CD8-positive, alpha-beta T cell (primary cell): ENCODE measurements at regions of chr9 and their contacts with region 1.

Region 1: GRCh38 chr9:128771745-128772519 is at the start of gene ZER1:
- DNase-seq: peak; percentile 86 to 98 (median 95)
- ATAC-seq: peak; percentile 85
- H3K4me3 ChIP-seq: peak within 1 kb of the TSS; percentile 82 to 98
- H3K4me3 Mint-ChIP-seq: peak within 1 kb of the TSS; percentile 96
- H3K27ac ChIP-seq: peak within 1 kb of the TSS; percentile 80 to 98
- H3K27ac Mint-ChIP-seq: peak within 1 kb of the TSS; percentile 99
- H3K4me1 ChIP-seq: peaks cover 22% of the 10 kb centered on the region
- H3K4me1 Mint-ChIP-seq: peaks cover 33% of the 10 kb centered on the region
- H3K27me3 ChIP-seq: no peaks in the 10 kb centered on the region
- H3K27me3 Mint-ChIP-seq: no peaks in the 10 kb centered on the region
- CTCF ChIP-seq: no peak
- total RNA-seq, gene ZER1: 35.9 to 45.2 TPM

Region 2: GRCh38 chr9:128688512-128689292 is 83.2 kb before region 1 on chr9 and contains the start of gene SET:
- CTCF ChIA-PET with region 1: no interaction called
- POLR2A ChIA-PET with region 1: interaction called, 5 read pairs
- intact Hi-C with region 1: loop called (anchors 1 kb)
- DNase-seq: peak; percentile 81 to 97 (median 92)
- ATAC-seq: peak; percentile 78
- H3K4me3 ChIP-seq: peak within 1 kb of the TSS; percentile 68 to 90
- H3K4me3 Mint-ChIP-seq: peak within 1 kb of the TSS; percentile 90
- H3K27ac ChIP-seq: peak within 1 kb of the TSS; percentile 68 to 91
- H3K27ac Mint-ChIP-seq: peak within 1 kb of the TSS; percentile 96
- H3K4me1 ChIP-seq: peaks cover 64% of the 10 kb centered on the region
- H3K4me1 Mint-ChIP-seq: peaks cover 67% of the 10 kb centered on the region
- H3K27me3 ChIP-seq: no peaks in the 10 kb centered on the region
- H3K27me3 Mint-ChIP-seq: no peaks in the 10 kb centered on the region
- CTCF ChIP-seq: no peak
- total RNA-seq, gene SET: 243 to 260 TPM

Region 3: DNA sequence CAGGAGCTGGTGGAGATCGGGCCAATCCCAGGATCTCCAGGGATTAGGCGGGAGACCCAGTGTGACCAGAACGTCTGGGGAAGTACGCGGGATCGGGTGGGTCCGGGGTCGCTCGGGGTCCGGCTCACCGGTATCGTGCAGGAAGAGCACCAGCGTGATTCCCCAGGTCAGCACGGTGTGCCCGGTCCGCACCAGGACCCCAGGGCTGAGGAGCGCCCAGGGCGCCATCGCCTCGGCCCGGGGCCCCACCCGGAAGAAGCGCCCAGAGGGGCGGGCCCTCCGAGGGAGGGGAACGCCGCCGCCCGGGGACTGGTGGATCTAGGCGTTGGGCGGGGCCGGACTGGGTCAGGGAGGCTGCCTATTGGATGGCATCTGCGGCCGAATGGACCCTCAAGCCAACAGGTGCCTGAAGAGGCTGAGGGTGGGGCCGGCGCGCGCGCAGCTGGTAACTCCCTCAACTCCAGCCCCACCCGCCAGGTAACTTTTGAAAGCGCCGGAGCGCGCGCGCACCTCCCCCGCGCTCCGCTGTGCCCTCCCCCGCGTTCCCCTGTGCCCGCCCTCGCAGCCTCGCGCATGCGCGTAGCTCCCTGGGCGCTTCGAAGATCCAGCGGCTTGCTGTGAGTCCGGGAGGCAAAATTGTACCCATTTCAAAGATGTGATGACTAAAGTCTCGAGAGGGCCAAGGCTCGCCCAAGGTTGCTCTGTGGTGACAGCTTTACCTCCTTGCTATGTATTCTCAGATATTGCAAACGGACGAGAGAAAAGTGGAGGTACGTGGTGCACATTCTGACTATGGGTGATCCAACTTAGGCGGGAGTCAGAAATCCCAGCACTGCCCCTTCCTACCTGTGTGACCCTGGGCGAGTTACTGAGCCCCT is 47.8 kb before region 1 on chr9 and contains the start of gene ZDHHC12:
- CTCF ChIA-PET with region 1: no interaction called
- POLR2A ChIA-PET with region 1: interaction called, 11 read pairs
- intact Hi-C with region 1: loop called (anchors 1 kb)
- DNase-seq: peak; percentile 97 to 100 (median 99)
- ATAC-seq: peak; percentile 97
- H3K4me3 ChIP-seq: peak within 1 kb of the TSS; percentile 74 to 84
- H3K4me3 Mint-ChIP-seq: peak within 1 kb of the TSS; percentile 89
- H3K27ac ChIP-seq: peak within 1 kb of the TSS; percentile 69 to 79
- H3K27ac Mint-ChIP-seq: peak within 1 kb of the TSS; percentile 92
- H3K4me1 ChIP-seq: peaks cover 37% of the 10 kb centered on the region
- H3K4me1 Mint-ChIP-seq: peaks cover 29% of the 10 kb centered on the region
- H3K27me3 ChIP-seq: no peaks in the 10 kb centered on the region
- H3K27me3 Mint-ChIP-seq: no peaks in the 10 kb centered on the region
- CTCF ChIP-seq: no peak
- total RNA-seq, gene ZDHHC12: 25.5 to 29.6 TPM

Region 4: DNA sequence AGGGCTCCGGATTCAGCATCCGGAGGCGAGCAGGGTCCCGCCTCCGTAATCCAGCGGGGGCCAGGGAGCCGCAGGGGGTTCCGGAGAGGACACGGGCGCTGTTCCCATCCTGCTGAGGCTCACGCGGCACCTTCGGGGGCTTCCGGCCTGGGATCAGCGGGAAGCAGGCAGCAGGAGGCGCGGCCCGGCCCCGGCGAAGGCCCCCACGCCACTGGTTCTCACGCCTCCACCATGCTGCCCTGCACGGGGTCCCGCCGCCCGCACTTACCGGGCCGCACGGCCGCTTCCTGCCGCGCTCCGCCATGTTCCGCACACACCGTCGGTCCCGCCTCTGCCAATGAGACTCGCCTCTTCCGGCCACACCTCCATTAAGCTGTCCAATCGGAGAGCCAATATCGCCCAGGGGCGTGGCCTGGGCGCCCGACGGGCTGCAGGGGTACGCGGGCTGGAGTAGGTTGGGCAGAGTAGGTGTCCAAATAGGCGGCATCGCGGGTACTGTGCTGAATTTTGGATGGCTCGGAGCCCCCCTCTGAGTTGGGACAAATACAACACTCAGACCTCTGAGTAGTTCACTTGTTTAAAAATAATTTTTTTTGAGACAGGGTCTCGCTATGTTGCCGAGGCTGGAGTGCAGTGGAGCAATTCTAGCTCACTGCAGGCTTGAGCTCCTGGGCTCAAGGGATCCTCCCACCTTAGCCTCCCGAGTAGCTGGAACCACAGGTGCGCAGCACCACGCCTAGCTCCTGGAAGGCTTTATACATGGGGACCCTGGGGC is 57.7 kb after region 1 on chr9 and contains the start of gene SPOUT1:
- CTCF ChIA-PET with region 1: no interaction called
- POLR2A ChIA-PET with region 1: interaction called, 4 read pairs
- intact Hi-C with region 1: loop called in 1 of 2 experiments (anchors 2 kb)
- DNase-seq: peak; percentile 88 to 96 (median 92)
- ATAC-seq: peak; percentile 99
- H3K4me3 ChIP-seq: peak within 1 kb of the TSS; percentile 89 to 99
- H3K4me3 Mint-ChIP-seq: peak within 1 kb of the TSS; percentile 96
- H3K27ac ChIP-seq: peak within 1 kb of the TSS; percentile 73 to 83
- H3K27ac Mint-ChIP-seq: peak within 1 kb of the TSS; percentile 94
- H3K4me1 ChIP-seq: peaks cover 18% of the 10 kb centered on the region
- H3K4me1 Mint-ChIP-seq: peaks cover 20% of the 10 kb centered on the region
- H3K27me3 ChIP-seq: no peaks in the 10 kb centered on the region
- H3K27me3 Mint-ChIP-seq: no peaks in the 10 kb centered on the region
- CTCF ChIP-seq: no peak
- total RNA-seq, gene SPOUT1: 25.0 to 25.2 TPM